Right cardiac atrium (tissue), 5 donors: ENCODE measurements at regions of chr3 and their contacts with region 1.

Region 1: DNA sequence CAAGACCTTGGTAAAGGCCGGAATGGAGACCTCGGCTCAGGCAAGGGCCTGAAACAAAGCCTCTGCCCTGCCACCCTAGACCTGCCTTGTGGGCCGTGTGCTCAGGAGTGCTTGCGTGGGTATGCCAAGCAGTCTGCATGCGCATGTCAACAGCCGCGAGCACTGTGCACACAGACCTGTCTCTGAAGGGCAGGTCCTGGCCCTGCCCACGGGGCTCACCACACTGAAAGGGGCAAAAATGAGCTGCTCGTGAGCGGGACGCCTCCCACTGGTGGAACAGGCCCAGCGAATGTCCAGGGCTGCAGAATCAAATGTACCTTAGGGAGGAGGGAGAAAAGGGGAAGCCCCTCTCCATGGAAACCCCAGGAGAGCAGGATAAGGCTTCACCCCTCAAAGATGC is 44.3 kb upstream of the FGD5 start:
- DNase-seq: no peak
- ATAC-seq: no peak
- H3K4me3 ChIP-seq: no peak overlapping the region
- H3K27ac ChIP-seq: no peak overlapping the region
- H3K4me1 ChIP-seq: no peaks in the 10 kb centered on the region
- H3K27me3 ChIP-seq: no peaks in the 10 kb centered on the region

Region 2: GRCh38 chr3:14688525-14688924 is 85.9 kb before region 1 on chr3:
- intact Hi-C with region 1: loop called in 2 of 4 experiments (anchors 5 to 10 kb)
- DNase-seq: no peak
- ATAC-seq: no peak
- H3K4me3 ChIP-seq: no peak overlapping the region
- H3K27ac ChIP-seq: no peak overlapping the region
- H3K4me1 ChIP-seq: no peaks in the 10 kb centered on the region
- H3K27me3 ChIP-seq: no peaks in the 10 kb centered on the region